ENCODE measurements at regions of chr3 and their contacts with region 1.

Region 1: DNA sequence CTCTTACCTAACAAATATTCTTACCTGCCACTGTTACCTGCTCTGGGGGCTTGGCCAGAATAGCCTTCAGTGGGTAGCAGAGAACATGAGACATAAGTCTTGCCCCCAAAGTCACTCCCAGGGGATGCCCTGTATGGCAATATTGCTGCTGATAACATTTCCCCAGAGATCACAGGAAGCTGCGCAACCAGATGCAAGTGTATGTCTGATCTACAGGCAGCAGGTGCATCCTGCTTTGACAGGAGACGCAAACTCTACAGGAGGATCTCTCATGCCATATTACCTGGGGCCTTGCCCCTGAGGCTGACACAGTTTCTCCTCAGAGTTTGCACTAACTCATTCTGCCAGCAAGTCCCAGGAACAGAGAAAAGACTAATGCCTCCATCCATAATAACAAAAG is 174.4 kb upstream of the LPP start:
- DNase-seq: peak in 33 of 35 experiments; percentile 11 to 66 (median 40)
- ATAC-seq: peak; percentile 75 to 90 (median 84)
- H3K4me3 ChIP-seq: no peak overlapping the region
- H3K4me3 Mint-ChIP-seq: peak overlapping the region in 1 of 3 donors; percentile 66
- H3K27ac ChIP-seq: peak overlapping the region; percentile 40
- H3K27ac Mint-ChIP-seq: peak overlapping the region; percentile 87 to 88
- H3K4me1 ChIP-seq: peaks cover 35 to 41% of the 10 kb centered on the region in 2 experiments
- H3K4me1 Mint-ChIP-seq: peaks cover 54 to 59% (median 58%) of the 10 kb centered on the region in 3 donors
- H3K27me3 ChIP-seq: no peaks in the 10 kb centered on the region
- H3K27me3 Mint-ChIP-seq: no peaks in the 10 kb centered on the region

Region 2: DNA sequence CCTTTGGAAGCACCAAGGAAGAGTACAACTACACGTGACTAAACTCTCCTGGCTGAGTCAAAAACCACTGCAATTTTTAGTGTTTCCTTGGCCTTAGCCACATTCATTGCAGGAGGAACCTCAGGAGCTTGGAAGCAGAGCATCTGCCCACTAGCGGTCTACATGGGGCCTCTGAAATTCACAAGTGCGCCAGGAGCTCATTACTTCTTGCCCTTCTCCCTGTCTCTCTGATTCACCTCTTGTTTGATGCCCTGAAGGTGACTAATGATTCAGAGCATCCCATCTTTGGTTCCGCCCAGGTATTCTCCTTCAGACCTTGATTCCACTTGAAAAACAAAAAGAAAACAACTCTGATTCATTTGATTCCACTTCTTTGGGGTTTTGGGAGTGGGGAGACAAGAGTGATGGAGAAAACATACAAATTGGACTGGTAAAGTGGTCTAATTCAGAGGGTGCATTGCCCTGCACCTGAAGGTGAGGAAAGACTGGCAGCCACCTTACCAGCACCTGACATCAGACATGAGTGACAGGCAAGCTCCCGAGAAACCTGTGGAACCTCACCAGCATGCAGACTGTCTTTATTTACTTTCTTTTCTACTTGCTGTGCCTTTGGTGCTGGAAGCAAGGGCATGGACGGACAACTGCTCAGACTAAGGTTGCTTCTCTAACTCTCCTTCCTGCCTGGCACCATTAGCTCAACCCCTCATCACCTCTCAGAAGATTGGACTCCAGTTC is 26.5 kb before region 1 on chr3:
- CTCF ChIA-PET with region 1: no interaction called
- POLR2A ChIA-PET with region 1: interaction called in 1 of 2 experiments, 12 read pairs
- DNase-seq: no peak
- ATAC-seq: no peak
- H3K4me3 ChIP-seq: no peak overlapping the region
- H3K4me3 Mint-ChIP-seq: no peak overlapping the region
- H3K27ac ChIP-seq: no peak overlapping the region
- H3K27ac Mint-ChIP-seq: no peak overlapping the region
- H3K4me1 ChIP-seq: peaks cover 10 to 11% of the 10 kb centered on the region in 2 experiments
- H3K4me1 Mint-ChIP-seq: peaks cover 14 to 30% (median 17%) of the 10 kb centered on the region in 3 donors
- H3K27me3 ChIP-seq: no peaks in the 10 kb centered on the region
- H3K27me3 Mint-ChIP-seq: no peaks in the 10 kb centered on the region

Region 3: DNA sequence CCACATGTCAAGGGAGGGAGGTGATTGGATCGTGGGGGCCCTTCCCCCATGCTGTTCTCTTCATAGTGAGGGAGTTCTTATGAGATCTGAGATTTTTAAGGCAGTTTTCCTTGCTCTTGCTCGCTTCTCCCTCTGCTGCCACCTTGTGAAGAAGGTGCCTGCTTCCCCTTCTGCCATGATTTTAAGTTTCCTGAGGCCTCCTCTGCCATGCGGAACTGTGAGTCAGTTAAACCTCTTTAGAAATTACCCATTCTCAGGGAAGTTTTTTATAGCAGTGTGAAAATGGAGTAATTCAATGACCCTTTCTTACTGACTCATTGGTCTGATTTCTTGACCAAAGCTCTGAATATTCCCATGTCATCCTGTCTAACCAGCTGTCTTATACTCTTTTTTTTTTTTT is 707.8 kb after region 1 on chr3:
- CTCF ChIA-PET with region 1: no interaction called
- POLR2A ChIA-PET with region 1: no interaction called
- DNase-seq: peak in 1 of 35 experiments; percentile 8
- ATAC-seq: no peak
- H3K4me3 ChIP-seq: no peak overlapping the region
- H3K4me3 Mint-ChIP-seq: no peak overlapping the region
- H3K27ac ChIP-seq: no peak overlapping the region
- H3K27ac Mint-ChIP-seq: no peak overlapping the region
- H3K4me1 ChIP-seq: peaks cover 0 to 5% of the 10 kb centered on the region in 2 experiments
- H3K4me1 Mint-ChIP-seq: peaks cover 0 to 19% (median 6%) of the 10 kb centered on the region in 3 donors
- H3K27me3 ChIP-seq: no peaks in the 10 kb centered on the region
- H3K27me3 Mint-ChIP-seq: no peaks in the 10 kb centered on the region

Measured in T-cell (primary cell).